ENCODE measurements at regions of chr7 and their contacts with region 1.

Region 1: GRCh38 chr7:148575640-148576411 is 14.7 kb upstream of the C7orf33 start:
- DNase-seq: peak; percentile 46 to 58
- ATAC-seq: peak; percentile 90 to 96; a peak in 5 of 6 replicates
- H3K4me3 ChIP-seq: no peak overlapping the region
- H3K27ac ChIP-seq: no peak overlapping the region
- H3K4me1 ChIP-seq: no peaks in the 10 kb centered on the region
- CTCF ChIP-seq: peak; percentile 77
- EP300 ChIP-seq: no peak
- POLR2A ChIP-seq: no peak
- RAD21 ChIP-seq: peak; percentile 78 to 87

Region 2: GRCh38 chr7:148556924-148557323 is 18.9 kb before region 1 on chr7:
- CTCF ChIA-PET with region 1: interaction called, 18 read pairs
- POLR2A ChIA-PET with region 1: no interaction called
- DNase-seq: no peak
- ATAC-seq: peak in 1 of 2 experiments; percentile 60; a peak in 3 of 6 replicates
- H3K4me3 ChIP-seq: no peak overlapping the region
- H3K27ac ChIP-seq: no peak overlapping the region
- H3K4me1 ChIP-seq: no peaks in the 10 kb centered on the region
- CTCF ChIP-seq: no peak
- EP300 ChIP-seq: no peak
- POLR2A ChIP-seq: no peak
- RAD21 ChIP-seq: no peak

Region 3: DNA sequence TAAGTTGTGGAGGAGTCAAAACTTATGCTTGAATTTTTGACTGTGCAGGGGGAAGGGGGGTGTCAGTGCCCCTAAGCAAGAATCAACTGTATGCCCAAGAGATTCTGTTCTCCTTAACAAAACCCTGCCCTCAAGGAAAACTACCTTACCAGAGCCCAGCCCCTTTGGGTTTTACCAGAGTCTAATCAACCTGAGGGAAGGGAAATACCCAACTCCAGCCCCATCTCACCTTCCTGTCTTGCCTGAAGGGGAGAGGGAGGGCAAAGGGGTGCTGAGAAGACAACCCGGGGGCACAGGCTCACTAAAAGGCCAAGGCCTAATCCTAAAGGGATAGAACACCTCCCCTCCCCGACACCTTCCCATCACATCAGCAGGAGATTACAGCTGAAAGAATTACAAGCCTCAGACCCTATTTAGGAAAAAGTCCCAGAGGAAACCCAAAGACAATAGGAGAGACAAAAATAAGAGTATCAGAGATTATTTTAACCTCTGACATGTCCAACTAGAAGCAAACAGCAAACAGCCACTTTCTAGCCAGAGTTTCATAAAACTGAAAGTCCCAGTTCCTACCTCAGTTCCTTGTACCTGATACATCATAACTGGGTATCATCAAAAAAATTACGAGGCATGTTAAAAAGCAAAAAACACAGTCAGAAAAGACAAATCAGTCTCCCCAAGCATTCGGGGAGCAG is 12.1 kb before region 1 on chr7:
- CTCF ChIA-PET with region 1: interaction called, 17 read pairs
- POLR2A ChIA-PET with region 1: no interaction called
- DNase-seq: no peak
- ATAC-seq: no peak
- H3K4me3 ChIP-seq: no peak overlapping the region
- H3K27ac ChIP-seq: no peak overlapping the region
- H3K4me1 ChIP-seq: 0 out of 3 replicates have a peak, but pooled peaks cover 3% of the 10 kb centered on the region
- CTCF ChIP-seq: no peak
- EP300 ChIP-seq: no peak
- POLR2A ChIP-seq: no peak
- RAD21 ChIP-seq: no peak

Region 4: GRCh38 chr7:148650232-148650858 is 74.5 kb after region 1 on chr7:
- CTCF ChIA-PET with region 1: no interaction called
- POLR2A ChIA-PET with region 1: no interaction called
- DNase-seq: no peak
- ATAC-seq: peak in 1 of 2 experiments; percentile 44; a peak in 2 of 6 replicates
- H3K4me3 ChIP-seq: no peak overlapping the region
- H3K27ac ChIP-seq: no peak overlapping the region
- H3K4me1 ChIP-seq: peaks cover 2% of the 10 kb centered on the region; the same call in 1 of the 3 replicates
- CTCF ChIP-seq: no peak
- EP300 ChIP-seq: no peak
- POLR2A ChIP-seq: no peak
- RAD21 ChIP-seq: no peak

Measured in A549 (cell line).